ENCODE measurements at regions of chr1 and their contacts with region 1.

Region 1: GRCh38 chr1:185720633-185721272 is 13.4 kb upstream of the HMCN1 start:
- DNase-seq: peak; percentile 42 to 72 (median 61)
- H3K4me3 ChIP-seq: no peak overlapping the region
- H3K27ac ChIP-seq: no peak overlapping the region
- H3K4me1 ChIP-seq: no peaks in the 10 kb centered on the region
- H3K27me3 ChIP-seq: peaks cover 0 to 1% (median 0%) of the 10 kb centered on the region in 5 experiments

Region 2: GRCh38 chr1:185733818-185734771 is 13.3 kb after region 1 on chr1 and contains the start of gene HMCN1:
- CTCF ChIA-PET with region 1: interaction called, 14 read pairs
- POLR2A ChIA-PET with region 1: no interaction called
- DNase-seq: peak; percentile 28 to 58 (median 39)
- H3K4me3 ChIP-seq: peak within 1 kb of the TSS; percentile 13 to 82 (median 58)
- H3K27ac ChIP-seq: no peak within 1 kb of the TSS
- H3K4me1 ChIP-seq: peaks cover 0 to 12% (median 10%) of the 10 kb centered on the region in 4 experiments
- H3K27me3 ChIP-seq: peaks cover 2 to 34% (median 20%) of the 10 kb centered on the region in 5 experiments

Region 3: DNA sequence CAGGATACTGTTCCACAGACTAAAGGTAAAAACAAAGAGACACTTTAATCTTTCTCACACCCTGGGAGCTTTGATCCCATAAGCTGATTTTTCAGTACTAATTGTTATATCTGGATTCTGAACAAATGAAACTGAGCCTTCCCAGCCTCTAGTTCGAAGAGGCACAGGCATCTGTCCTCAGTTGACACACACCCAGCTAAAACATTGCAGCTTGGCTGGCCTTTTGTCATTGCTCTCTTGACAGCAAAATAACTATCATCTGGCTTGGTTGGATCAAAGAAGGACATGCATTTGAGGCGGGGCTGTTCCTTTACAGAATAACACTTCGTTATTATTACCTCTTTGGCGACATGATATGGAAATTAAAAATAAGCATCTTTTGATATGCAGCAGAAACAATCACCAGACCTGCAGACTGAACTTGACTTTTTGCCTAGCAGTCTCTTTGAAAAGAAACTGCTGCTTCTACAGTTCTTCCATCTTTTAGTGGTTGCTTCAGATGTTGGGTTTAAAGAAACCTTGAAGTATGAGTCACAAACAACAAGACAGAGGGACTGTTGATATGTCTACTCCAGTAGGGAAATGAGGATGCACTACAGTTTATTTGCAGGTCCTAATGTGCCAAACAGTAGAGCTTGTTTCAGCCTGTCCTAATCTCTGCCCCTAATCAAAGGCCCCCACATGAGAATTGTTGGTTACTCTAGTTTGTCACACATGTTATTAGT is 487.8 kb after region 1 on chr1:
- CTCF ChIA-PET with region 1: interaction called, 23 read pairs
- POLR2A ChIA-PET with region 1: no interaction called
- DNase-seq: no peak
- H3K4me3 ChIP-seq: no peak overlapping the region
- H3K27ac ChIP-seq: no peak overlapping the region
- H3K4me1 ChIP-seq: no peaks in the 10 kb centered on the region
- H3K27me3 ChIP-seq: no peaks in the 10 kb centered on the region

Region 4: DNA sequence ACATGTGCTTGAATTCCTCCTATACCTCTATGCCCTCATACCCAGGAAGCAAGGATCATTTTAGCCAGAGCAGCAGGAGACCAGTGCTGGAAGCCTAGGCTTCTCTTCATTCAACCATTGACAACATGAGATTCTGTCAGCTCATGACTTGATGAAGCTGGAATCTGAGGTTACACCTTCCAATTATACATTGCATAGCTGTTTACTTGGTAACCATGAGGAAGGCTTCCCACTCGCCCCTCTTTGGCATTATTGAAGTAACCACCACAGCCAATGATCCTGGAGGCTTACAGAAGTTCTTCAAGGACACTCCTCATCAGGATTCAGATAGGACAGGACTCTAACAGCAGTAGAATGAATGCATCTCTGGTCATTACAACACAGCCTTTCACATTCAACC is 494.1 kb after region 1 on chr1:
- CTCF ChIA-PET with region 1: interaction called, 23 read pairs
- POLR2A ChIA-PET with region 1: no interaction called
- DNase-seq: no peak
- H3K4me3 ChIP-seq: no peak overlapping the region
- H3K27ac ChIP-seq: no peak overlapping the region
- H3K4me1 ChIP-seq: no peaks in the 10 kb centered on the region
- H3K27me3 ChIP-seq: no peaks in the 10 kb centered on the region